ENCODE measurements at regions of chr18 and their contacts with region 1.

Region 1: GRCh38 chr18:62186774-62187542 is at the starts of genes PIGN and RELCH:
- H3K4me3 Mint-ChIP-seq: peak within 1 kb of the TSS; percentile 98
- H3K27ac Mint-ChIP-seq: peak within 1 kb of the TSS; percentile 98
- H3K4me1 Mint-ChIP-seq: peaks cover 43% of the 10 kb centered on the region
- H3K27me3 Mint-ChIP-seq: no peaks in the 10 kb centered on the region

Region 2: DNA sequence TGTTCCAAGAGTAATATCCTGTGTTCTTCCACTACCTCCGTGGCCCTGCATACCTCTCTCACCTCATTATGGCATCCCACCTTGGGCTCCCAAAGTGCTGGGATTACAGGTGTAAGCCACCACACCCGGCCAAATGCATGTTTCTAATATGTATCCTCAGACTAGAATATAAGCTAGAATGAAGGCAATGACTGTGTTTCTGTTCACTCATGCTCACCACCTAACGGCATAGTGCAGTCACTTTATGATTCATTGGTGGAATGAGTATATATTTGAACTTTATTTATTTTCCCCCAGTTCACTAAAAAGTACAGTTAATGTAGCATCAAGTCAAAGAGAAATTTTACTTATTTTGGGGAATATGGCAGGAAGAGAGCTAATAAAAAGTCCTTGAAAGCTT is 11.4 kb before region 1 on chr18:
- intact Hi-C with region 1: no loop called
- H3K4me3 Mint-ChIP-seq: no peak overlapping the region
- H3K27ac Mint-ChIP-seq: no peak overlapping the region
- H3K4me1 Mint-ChIP-seq: peaks cover 5% of the 10 kb centered on the region
- H3K27me3 Mint-ChIP-seq: no peaks in the 10 kb centered on the region

Region 3: DNA sequence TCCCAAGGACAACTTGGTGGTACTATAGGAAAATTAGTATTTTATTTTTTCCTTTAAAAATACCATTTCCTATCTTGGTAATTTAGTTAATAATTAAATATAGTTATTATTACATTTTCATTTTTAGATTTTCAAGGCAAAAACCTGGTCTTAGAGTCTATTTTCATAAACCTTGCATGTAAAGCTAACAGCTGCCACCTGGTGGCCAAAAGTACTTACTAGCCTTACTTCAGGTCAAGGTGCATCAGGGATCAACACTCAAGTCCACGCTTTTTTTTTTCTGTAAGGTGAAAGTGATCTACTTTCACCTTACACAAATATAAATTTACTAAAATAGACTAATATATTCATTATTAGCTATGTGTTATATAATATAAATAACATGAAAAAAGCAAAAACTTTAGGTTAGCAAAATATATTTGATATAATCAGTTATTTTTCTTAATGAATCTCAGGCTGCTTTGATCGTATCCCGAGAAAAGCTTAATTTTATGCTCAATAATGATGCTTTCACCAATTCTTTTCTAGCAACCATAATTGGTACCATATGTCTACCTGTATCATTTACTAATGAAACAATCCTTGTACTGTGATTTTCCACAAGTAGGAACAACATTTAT is 62.6 kb after region 1 on chr18:
- intact Hi-C with region 1: loop called (anchors 1 kb)
- H3K4me3 Mint-ChIP-seq: no peak overlapping the region
- H3K27ac Mint-ChIP-seq: no peak overlapping the region
- H3K4me1 Mint-ChIP-seq: no peaks in the 10 kb centered on the region
- H3K27me3 Mint-ChIP-seq: no peaks in the 10 kb centered on the region

Region 4: GRCh38 chr18:62522504-62523254 is 335.7 kb after region 1 on chr18 and contains the start of gene ZCCHC2:
- intact Hi-C with region 1: loop called (anchors 2 kb)
- H3K4me3 Mint-ChIP-seq: peak within 1 kb of the TSS; percentile 91
- H3K27ac Mint-ChIP-seq: peak within 1 kb of the TSS; percentile 89
- H3K4me1 Mint-ChIP-seq: peaks cover 33% of the 10 kb centered on the region
- H3K27me3 Mint-ChIP-seq: peaks cover 5% of the 10 kb centered on the region

Region 5: DNA sequence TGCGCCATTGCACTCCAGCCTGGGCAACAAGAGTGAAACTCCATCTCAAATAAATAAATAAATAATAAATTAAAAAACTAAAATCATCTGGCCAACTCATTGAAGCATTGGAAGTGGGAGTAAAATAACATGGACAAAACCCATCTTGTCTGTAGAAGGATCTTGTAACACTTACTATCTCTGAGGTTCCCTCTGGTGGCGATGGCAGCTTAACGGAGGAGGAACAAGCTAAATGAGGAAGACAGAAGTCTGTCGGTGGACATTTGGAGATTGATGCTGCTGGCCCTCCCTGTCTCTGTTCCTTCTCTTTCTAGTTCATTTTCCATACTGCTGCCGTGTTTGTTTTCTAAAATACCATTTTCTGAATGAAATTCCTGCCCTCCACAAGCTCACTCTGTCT is 379.2 kb after region 1 on chr18:
- intact Hi-C with region 1: loop called (anchors 5 kb)
- H3K4me3 Mint-ChIP-seq: no peak overlapping the region
- H3K27ac Mint-ChIP-seq: no peak overlapping the region
- H3K4me1 Mint-ChIP-seq: peaks cover 6% of the 10 kb centered on the region
- H3K27me3 Mint-ChIP-seq: no peaks in the 10 kb centered on the region

Region 6: DNA sequence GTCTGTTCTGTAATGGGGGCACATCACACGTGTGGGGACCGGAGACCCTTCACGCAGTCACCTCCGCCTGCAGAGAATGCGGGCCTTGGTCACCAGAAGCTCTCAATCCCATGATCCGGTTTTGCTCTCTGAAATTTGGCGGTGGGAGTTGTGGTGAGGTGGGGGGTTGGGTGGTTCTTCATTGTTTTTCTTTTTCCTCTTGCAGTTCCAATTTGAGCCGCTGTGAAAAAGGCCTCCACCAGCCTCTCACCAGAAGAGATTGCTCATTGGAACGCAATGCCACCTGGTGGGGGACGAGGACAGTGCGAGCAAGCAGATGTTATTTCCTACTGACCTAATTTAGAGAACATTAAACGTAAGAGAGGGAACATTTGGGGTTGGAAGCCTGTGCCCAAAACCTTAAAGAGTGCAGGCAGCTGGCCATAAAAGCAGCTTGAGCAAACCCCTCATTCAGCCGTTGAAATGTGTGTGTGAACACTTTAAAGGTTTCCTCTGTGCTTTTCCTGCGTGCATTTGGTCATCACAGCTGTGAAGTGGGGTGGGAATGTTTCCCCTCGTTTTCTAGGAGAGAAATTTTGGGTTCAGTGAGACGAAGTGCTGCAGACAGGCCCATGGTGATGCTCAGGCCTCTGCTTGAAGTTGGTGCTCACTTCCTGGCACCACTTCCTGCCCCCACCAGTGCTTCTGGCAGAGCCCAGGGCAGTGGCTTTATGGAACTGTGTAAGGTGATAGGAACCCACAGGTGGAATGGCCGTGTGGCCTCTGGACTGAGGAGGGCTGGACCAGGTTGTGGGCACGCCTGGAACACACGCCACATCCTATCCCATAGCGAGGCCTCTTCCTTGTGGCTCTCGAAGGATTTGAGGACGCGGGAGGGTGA is 397.5 kb after region 1 on chr18:
- intact Hi-C with region 1: loop called (anchors 5 kb)
- H3K4me3 Mint-ChIP-seq: peak overlapping the region; percentile 40
- H3K27ac Mint-ChIP-seq: peak overlapping the region; percentile 68
- H3K4me1 Mint-ChIP-seq: peaks cover 44% of the 10 kb centered on the region
- H3K27me3 Mint-ChIP-seq: peaks cover 2% of the 10 kb centered on the region